ENCODE measurements at regions of chr12 and their contacts with region 1.

Region 1: GRCh38 chr12:54993161-54993835 is 8.7 kb upstream of the TESPA1 start:
- DNase-seq: no peak
- ATAC-seq: peak; percentile 90
- H3K4me3 ChIP-seq: no peak overlapping the region
- H3K27ac ChIP-seq: no peak overlapping the region
- H3K4me1 ChIP-seq: no peaks in the 10 kb centered on the region
- H3K27me3 ChIP-seq: no peaks in the 10 kb centered on the region
- CTCF ChIP-seq: peak; percentile 90

Region 2: DNA sequence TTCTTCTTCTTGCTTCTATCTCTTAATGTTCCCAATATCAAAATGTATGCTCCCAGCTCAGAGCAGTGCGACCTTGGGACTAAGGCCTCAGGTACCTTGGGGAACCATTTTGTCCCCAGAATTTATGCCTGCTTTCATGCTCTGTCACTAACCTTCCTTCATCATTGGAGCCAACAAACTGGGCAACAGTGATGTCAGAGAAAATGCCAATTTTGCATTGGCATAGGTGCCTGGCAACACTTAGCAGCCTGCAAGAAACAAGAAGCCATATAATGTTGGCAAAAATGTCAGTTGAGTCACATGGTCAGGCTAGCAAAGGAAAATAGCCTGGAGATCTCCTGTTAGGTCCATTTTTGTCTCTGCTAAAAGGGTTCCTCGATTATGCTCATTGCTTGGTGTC is 192.8 kb before region 1 on chr12:
- intact Hi-C with region 1: no loop called
- DNase-seq: no peak
- ATAC-seq: no peak
- H3K4me3 ChIP-seq: no peak overlapping the region
- H3K27ac ChIP-seq: no peak overlapping the region
- H3K4me1 ChIP-seq: no peaks in the 10 kb centered on the region
- H3K27me3 ChIP-seq: no peaks in the 10 kb centered on the region
- CTCF ChIP-seq: no peak

Region 3: GRCh38 chr12:54858562-54858961 is 134.7 kb before region 1 on chr12:
- intact Hi-C with region 1: no loop called
- DNase-seq: no peak
- ATAC-seq: no peak
- H3K4me3 ChIP-seq: no peak overlapping the region
- H3K27ac ChIP-seq: no peak overlapping the region
- H3K4me1 ChIP-seq: no peaks in the 10 kb centered on the region
- H3K27me3 ChIP-seq: no peaks in the 10 kb centered on the region
- CTCF ChIP-seq: no peak

Region 4: DNA sequence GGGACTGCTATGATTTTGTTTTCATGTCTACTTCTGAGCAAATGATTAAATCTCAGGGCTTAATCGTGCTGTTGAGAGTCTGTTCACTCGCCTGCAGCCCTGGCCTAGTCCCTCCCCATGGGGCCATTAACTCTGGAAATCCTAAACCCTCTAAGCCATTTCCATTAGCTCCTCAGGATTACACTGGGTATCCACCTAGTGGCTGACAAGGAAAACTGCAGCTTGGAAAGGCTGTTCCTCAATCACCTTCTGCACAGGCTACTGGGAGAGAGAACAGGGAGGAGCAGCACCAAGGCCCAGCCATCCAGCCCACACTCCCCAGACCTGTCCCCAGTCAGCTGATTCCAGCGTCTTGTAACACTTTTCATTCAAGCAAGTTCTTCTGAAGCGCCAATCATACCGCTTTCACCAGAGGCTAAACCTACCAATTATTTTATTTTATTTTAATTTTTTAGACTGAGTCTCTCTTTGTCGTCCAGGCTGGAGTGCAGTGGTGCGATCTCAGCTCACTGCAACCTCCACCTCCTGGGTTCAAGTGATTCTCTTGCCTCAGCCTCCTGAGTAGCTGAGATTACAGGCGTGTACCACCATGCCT is 75.2 kb after region 1 on chr12:
- intact Hi-C with region 1: loop called (anchors 10 kb)
- DNase-seq: no peak
- ATAC-seq: peak; percentile 93
- H3K4me3 ChIP-seq: no peak overlapping the region
- H3K27ac ChIP-seq: no peak overlapping the region
- H3K4me1 ChIP-seq: no peaks in the 10 kb centered on the region
- H3K27me3 ChIP-seq: peaks cover 11% of the 10 kb centered on the region
- CTCF ChIP-seq: peak; percentile 74